ENCODE measurements at regions of chr12 and their contacts with region 1.

Region 1: GRCh38 chr12:68259318-68259940 is 6.0 kb upstream of the IL22 start:
- DNase-seq: peak; percentile 31
- H3K4me3 Mint-ChIP-seq: peak overlapping the region; percentile 12
- H3K27ac Mint-ChIP-seq: peak overlapping the region; percentile 69
- H3K4me1 Mint-ChIP-seq: peaks cover 68% of the 10 kb centered on the region
- H3K27me3 Mint-ChIP-seq: peaks cover 19% of the 10 kb centered on the region

Region 2: GRCh38 chr12:68231229-68231628 is 28.2 kb before region 1 on chr12:
- intact Hi-C with region 1: loop called (anchors 1 kb)
- DNase-seq: no peak
- H3K4me3 Mint-ChIP-seq: no peak overlapping the region
- H3K27ac Mint-ChIP-seq: peak overlapping the region; percentile 13
- H3K4me1 Mint-ChIP-seq: peaks cover 66% of the 10 kb centered on the region
- H3K27me3 Mint-ChIP-seq: no peaks in the 10 kb centered on the region

Region 3: GRCh38 chr12:68236421-68237059 is 22.9 kb before region 1 on chr12:
- intact Hi-C with region 1: loop called (anchors 1 kb)
- DNase-seq: peak; percentile 39
- H3K4me3 Mint-ChIP-seq: peak overlapping the region; percentile 84
- H3K27ac Mint-ChIP-seq: peak overlapping the region; percentile 93
- H3K4me1 Mint-ChIP-seq: peaks cover 94% of the 10 kb centered on the region
- H3K27me3 Mint-ChIP-seq: no peaks in the 10 kb centered on the region

Region 4: DNA sequence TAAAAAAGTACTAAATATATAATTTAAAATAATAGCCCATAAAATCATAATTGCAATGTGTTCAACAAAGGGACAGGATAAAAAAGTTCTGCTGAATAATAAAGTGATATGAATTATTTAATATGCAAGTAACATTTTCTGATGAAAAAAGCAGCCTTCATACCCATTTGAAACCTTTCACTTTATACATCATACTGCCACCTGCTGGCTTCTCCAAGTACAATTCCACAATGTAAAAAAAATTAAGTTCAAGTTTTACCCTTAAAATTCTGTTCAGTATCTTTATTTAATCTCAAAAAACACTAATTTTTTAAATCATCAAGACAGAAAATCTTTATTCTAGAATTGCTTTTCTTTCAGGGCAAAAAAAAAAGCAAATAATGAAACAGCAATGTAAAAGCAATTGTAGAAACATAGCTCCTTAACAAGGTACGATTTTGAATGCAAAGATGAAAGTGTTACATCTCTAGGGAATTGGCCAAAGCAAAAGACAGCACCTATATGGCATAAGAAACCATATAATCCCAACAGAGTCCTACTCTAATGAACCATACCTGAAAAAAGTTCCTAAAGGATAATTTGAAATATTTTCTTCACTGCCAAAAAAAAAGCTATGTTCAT is 57.7 kb after region 1 on chr12:
- intact Hi-C with region 1: loop called (anchors 2 kb)
- DNase-seq: no peak
- H3K4me3 Mint-ChIP-seq: no peak overlapping the region
- H3K27ac Mint-ChIP-seq: no peak overlapping the region
- H3K4me1 Mint-ChIP-seq: peaks cover 17% of the 10 kb centered on the region
- H3K27me3 Mint-ChIP-seq: no peaks in the 10 kb centered on the region

Region 5: GRCh38 chr12:68374307-68374982 is 115.0 kb after region 1 on chr12:
- intact Hi-C with region 1: loop called (anchors 1 kb)
- DNase-seq: peak; percentile 60
- H3K4me3 Mint-ChIP-seq: peak overlapping the region; percentile 31
- H3K27ac Mint-ChIP-seq: peak overlapping the region; percentile 93
- H3K4me1 Mint-ChIP-seq: peaks cover 68% of the 10 kb centered on the region
- H3K27me3 Mint-ChIP-seq: no peaks in the 10 kb centered on the region

Region 6: DNA sequence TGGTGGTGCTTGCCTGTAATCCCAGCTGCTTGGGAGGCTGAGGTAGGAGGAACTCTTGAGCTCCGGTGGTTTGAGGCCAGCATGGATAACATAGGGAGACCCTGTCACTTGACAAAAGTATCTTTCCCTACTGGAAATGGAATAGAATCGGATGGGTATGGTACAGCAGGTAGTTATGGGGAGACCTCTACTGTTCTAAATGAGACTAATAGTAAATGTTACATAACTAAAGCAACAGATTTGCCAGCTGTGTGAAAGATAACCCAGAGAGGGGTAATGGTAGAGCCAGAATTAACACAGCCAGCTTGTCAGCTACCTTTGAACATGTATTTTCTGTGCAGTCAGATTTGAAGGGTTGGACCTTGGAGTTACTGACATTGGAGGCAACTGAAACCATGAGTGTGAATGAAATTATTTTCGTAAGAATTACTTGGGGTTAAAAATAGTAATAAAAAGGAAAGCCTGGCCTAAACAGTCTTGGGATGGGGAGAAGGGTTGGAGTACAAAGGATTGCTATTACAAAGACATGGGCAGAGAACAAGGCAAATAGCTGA is 405.7 kb after region 1 on chr12:
- intact Hi-C with region 1: no loop called
- DNase-seq: no peak
- H3K4me3 Mint-ChIP-seq: no peak overlapping the region
- H3K27ac Mint-ChIP-seq: peak overlapping the region; percentile 25
- H3K4me1 Mint-ChIP-seq: peaks cover 22% of the 10 kb centered on the region
- H3K27me3 Mint-ChIP-seq: no peaks in the 10 kb centered on the region

Measured in activated T-helper 1 cell treated with anti-CD3 and anti-CD28 coated beads, Interleukin-12 subunit alpha, Interleukin-12 subunit beta, Interleukin-2, Interleukin-4 antibody, amounts not matched to agents 30 ng/mL and 10 ng/mL and 1 ng/mL, durations not matched to agents 14 hours and 24 hours and 36 hours (primary cell).